ENCODE measurements at regions of chr5 and their contacts with region 1.

Region 1: GRCh38 chr5:671459-672328 is 21.5 kb downstream of the TPPP start:
- DNase-seq: peak; percentile 74 to 75
- ATAC-seq: peak; percentile 57 to 80
- H3K4me3 ChIP-seq: peak overlapping the region; percentile 35
- H3K27ac ChIP-seq: peak overlapping the region; percentile 66 to 88; a peak in 5 of 6 replicates
- H3K4me1 ChIP-seq: peaks cover 43% of the 10 kb centered on the region
- CTCF ChIP-seq: peak; percentile 86
- EP300 ChIP-seq: no peak
- POLR2A ChIP-seq: no peak
- RAD21 ChIP-seq: peak; percentile 80 to 90

Region 2: DNA sequence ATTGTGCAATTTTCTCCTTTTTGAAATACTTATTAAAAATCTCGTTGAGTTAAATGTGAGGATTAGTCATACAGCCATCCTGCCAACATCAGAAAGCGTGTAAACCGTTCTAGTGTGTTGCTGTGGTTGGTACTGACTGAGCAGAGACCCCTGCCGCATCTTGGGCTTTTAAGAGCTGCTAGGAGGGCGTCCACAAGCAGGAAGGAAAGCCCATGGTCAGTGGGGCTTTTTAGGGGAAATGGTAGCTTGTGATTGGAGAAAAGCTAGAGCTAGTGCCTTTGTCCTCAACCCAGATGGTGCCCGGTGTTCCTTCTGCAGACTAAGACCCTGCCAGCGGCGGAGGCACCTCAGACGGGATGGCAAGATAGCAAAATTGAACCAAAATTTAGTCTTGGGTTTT is 452.2 kb before region 1 on chr5:
- CTCF ChIA-PET with region 1: no interaction called
- POLR2A ChIA-PET with region 1: no interaction called
- DNase-seq: no peak
- ATAC-seq: no peak
- H3K4me3 ChIP-seq: peak overlapping the region; percentile 99
- H3K27ac ChIP-seq: peak overlapping the region; percentile 36 to 85; a peak in 2 of 6 replicates
- H3K4me1 ChIP-seq: peaks cover 20% of the 10 kb centered on the region
- CTCF ChIP-seq: no peak
- EP300 ChIP-seq: no peak
- POLR2A ChIP-seq: no peak
- RAD21 ChIP-seq: no peak

Region 3: DNA sequence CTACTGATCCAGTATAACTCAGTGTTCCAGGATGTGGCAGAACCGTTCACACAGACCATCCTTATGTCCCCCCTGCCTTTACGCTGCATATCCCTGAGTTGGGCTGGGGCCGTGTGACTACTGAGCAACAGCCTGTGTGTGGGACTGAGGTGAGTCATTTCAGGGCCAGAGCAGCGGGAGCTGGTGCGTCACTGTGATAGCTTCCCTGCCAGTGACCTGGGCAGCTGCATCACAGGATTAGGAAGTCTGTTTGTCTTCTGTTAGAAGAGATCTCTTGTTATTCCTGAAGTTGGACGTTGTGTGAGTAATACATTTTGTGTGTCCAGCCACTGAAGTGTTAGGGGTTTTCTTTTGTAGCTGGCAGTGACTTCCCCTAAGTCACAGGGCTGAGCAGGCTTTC is 14.1 kb before region 1 on chr5:
- CTCF ChIA-PET with region 1: interaction called, 46 read pairs
- POLR2A ChIA-PET with region 1: no interaction called
- DNase-seq: peak in 1 of 2 experiments; percentile 23
- ATAC-seq: peak in 1 of 2 experiments; percentile 55; a peak in 1 of 6 replicates
- H3K4me3 ChIP-seq: no peak overlapping the region
- H3K27ac ChIP-seq: no peak overlapping the region
- H3K4me1 ChIP-seq: no peaks in the 10 kb centered on the region
- CTCF ChIP-seq: no peak
- EP300 ChIP-seq: no peak
- POLR2A ChIP-seq: no peak
- RAD21 ChIP-seq: no peak

Region 4: GRCh38 chr5:892394-893136 is 220.9 kb after region 1 on chr5 and contains the starts of genes BRD9 and TRIP13:
- CTCF ChIA-PET with region 1: interaction called, 19 read pairs
- POLR2A ChIA-PET with region 1: no interaction called
- DNase-seq: peak; percentile 82 to 94
- ATAC-seq: peak; percentile 92
- H3K4me3 ChIP-seq: peak within 1 kb of the TSS; percentile 96
- H3K27ac ChIP-seq: peak within 1 kb of the TSS; percentile 98 to 100
- H3K4me1 ChIP-seq: peaks cover 20% of the 10 kb centered on the region
- CTCF ChIP-seq: no peak
- EP300 ChIP-seq: no peak
- POLR2A ChIP-seq: peak; percentile 40
- RAD21 ChIP-seq: no peak
- polyA plus RNA-seq, gene BRD9: 11.6 and 15.8 TPM in 2 replicates
- polyA plus RNA-seq, gene TRIP13: 62.4 and 82.4 TPM in 2 replicates

Region 5: GRCh38 chr5:902129-902916 is 230.6 kb after region 1 on chr5:
- CTCF ChIA-PET with region 1: interaction called, 87 read pairs
- POLR2A ChIA-PET with region 1: interaction called, 5 read pairs
- DNase-seq: no peak
- ATAC-seq: no peak
- H3K4me3 ChIP-seq: no peak overlapping the region
- H3K27ac ChIP-seq: no peak overlapping the region
- H3K4me1 ChIP-seq: no peaks in the 10 kb centered on the region
- CTCF ChIP-seq: no peak
- EP300 ChIP-seq: no peak
- POLR2A ChIP-seq: no peak
- RAD21 ChIP-seq: no peak

Region 6: GRCh38 chr5:912280-913091 is 240.8 kb after region 1 on chr5:
- CTCF ChIA-PET with region 1: interaction called, 46 read pairs
- POLR2A ChIA-PET with region 1: no interaction called
- DNase-seq: peak; percentile 96 to 98
- ATAC-seq: peak; percentile 95 to 96
- H3K4me3 ChIP-seq: 0 out of 3 replicates have a peak overlapping the region, but pooled peaks have one; percentile 2
- H3K27ac ChIP-seq: peak overlapping the region; percentile 60 to 83
- H3K4me1 ChIP-seq: peaks cover 24% of the 10 kb centered on the region
- CTCF ChIP-seq: peak; percentile 47
- EP300 ChIP-seq: peak; percentile 54 to 83; a peak in 3 of 5 replicates
- POLR2A ChIP-seq: no peak
- RAD21 ChIP-seq: peak in 1 of 2 experiments; percentile 27; a peak in 2 of 5 replicates

Measured in A549 (cell line).